Left cardiac atrium (tissue), 4 donors: ENCODE measurements at regions of chr10 and their contacts with region 1.

Region 1: DNA sequence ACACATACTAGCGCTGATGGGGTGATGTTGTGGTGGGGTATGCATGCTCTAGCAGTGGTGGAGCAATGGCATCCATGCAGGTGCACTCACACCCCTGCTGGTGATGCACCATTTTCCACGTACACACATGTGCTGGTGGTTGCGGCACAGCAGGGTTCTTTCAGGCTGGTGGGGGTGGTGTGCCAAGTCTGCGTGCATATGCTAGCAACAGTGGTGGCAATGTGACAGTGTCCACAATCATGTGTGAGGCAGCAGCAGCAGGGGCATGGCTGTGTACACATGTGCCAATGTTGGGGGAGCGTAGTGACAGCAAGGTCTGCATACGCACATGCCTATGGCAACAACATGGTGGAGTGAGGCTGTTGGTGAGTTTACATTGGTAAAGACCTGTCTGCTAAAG is 148.1 kb downstream of the ZWINT start:
- DNase-seq: no peak
- ATAC-seq: no peak

Region 2: DNA sequence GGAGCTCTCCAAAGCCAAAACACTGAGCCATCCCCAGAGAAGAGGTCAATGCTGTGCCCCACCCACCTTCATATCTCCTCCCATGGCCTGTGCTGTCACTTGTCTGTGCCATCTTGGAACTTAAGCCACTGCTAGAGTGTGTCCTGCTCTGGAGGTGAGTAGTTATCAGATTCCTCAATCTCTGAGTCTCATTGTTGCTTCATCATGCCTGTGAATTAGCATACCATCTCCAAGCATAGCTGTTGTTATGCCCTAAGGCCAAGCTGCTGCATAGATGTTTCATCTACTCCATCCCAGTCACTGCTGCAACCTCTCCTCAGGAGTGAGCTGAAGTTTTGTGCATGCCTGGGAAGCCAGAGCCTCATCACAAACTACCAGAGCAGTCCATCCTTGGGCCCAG is 200.9 kb before region 1 on chr10:
- intact Hi-C with region 1: loop called in 1 of 2 experiments (anchors 10 kb)
- DNase-seq: no peak
- ATAC-seq: no peak

Region 3: DNA sequence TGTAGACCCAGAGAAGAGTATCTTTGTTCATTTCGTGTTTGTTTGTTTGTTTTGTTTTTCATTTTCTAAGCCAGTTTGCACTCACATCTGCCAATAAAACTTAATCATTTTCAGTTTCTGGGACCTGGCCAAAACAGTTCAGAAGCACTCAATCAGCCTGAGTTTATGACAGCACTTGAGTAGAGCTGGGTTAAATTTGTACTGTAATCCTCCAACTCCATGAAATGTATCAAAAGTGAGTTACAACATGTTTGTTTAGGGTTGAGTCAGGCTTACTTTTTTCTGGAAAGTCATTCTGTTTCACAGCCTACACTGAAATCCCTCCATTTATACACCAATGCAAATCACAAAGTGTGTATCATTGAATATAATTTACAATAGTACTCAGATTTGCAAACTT is 56.2 kb after region 1 on chr10:
- intact Hi-C with region 1: no loop called
- DNase-seq: no peak
- ATAC-seq: no peak

Region 4: GRCh38 chr10:56466005-56466404 is 253.1 kb after region 1 on chr10:
- intact Hi-C with region 1: no loop called
- DNase-seq: no peak
- ATAC-seq: no peak